ENCODE measurements at regions of chr1 and their contacts with region 1.

Region 1: DNA sequence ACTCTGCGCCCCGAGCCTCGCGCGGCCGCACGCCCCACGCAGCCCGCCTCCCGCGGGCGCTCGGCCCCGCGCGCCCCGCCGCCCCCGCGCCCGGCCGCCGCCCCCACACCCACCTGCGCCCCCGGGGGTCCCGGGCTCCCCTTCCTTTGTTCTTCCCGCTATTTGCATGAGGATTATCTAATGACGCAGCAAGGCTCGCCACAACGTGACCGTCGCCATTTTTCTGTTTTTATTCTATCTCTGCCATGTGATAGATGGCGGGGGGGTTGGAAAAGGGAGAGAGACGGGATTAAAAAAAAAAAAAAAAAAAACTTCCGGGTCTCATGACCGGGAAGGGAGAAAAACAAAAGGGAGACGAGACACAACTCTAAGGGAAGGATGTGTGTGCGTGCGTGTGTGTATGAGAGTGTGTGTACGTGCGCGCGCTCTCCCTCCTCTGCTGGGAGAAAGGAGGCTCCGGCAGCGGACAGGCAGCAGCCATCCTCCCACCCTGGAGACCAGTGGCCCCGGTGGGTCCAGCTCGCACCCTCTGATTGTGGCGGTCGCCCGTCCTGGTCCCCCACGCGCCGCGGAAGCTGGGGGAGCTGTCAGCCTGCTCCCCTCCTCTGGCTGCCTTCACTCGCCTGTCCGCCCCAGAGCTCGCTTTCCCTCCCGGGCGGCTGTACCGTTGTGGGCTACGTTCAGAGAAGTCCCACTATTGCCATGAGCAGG is 80.4 kb upstream of the AK4 start:
- DNase-seq: peak; percentile 49 to 92 (median 78)

Region 2: DNA sequence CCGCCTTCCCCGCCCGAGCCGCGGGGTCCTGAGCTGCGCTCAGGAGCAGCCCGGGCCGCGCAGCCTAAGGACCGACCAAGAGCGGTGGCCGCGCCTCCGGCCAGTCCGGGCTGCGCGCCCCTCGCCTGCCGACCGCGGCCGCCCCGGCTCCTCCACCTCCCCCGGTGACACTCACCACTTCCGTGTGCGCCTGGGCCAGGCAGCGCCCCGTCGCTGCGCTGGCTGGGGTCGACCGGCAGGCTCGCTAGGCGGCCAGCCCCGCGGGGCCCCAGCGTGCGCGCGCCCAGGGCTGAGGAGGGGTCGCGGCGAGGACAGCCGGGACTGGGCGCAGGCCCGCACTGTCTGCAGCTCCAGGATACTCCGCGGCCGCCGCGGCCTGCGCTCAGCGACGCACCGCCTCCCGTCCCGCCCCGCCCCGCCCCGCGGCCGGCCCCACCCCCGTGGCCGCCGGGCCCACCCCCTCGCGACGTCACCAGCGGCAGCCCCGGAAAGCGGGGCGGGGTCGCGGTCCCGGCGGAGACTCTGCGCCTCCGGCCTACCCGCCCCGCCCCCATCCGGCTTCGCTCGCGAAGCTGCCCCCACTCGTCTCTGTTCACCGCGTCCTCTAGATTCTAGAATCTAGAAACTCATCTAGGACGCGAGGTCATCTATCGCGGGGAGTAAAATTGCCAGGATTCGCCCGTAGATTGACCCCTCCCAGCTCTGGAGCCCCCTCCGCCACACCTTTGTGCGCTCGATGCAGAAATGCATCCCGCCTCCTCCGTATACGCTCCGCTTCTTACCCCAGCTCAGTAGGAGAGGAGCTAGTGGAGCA is 101.3 kb before region 1 on chr1 and contains the start of gene JAK1:
- intact Hi-C with region 1: loop called (anchors 10 kb)
- DNase-seq: peak; percentile 55 to 96 (median 90)

Region 3: DNA sequence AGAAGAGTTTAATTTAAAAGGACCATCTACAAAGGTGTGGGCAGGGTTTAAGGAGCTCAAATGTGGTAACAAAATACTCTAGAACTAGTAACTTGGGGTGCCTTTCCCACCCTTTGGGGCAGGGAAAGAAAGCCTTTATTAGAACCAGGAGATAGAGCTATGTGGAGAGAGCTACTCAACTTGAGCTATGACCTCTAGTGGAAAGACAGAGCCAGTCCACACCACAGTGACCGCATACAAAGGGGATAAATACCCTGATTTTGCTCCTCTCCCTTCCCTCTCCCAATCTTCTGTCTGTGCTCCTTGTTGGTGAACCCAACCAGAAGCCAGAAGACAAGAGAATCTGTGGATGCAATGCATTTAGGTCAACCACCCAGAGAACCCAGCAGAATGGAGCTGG is 46.9 kb before region 1 on chr1:
- intact Hi-C with region 1: no loop called
- DNase-seq: no peak

Region 4: DNA sequence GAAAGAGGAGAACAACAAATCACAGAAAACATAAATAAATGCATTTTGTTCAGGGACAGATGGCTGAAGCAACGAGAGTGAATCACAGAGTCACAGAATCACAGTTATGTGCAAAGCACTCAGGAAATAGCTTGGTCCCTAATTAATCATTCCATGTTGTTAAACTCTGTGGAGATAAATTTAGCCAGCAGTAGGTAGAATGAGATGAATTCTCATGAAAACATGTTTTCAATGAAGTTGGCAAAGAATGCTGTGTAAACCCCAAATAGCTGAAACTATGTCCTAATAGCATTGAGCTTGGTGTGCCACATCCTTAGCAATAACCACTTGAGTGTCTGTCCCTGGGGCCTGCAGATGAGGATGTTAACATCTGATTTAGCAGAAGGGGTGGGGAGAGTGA is 373.3 kb after region 1 on chr1:
- intact Hi-C with region 1: no loop called
- DNase-seq: no peak

Measured in head of caudate nucleus (tissue), 42 donors.